Activated naive CD8-positive, alpha-beta T cell treated with anti-CD3 and anti-CD28 coated beads, Interleukin-2, amount 10 ng/mL, durations not matched to agents 7 days and 5 days (primary cell): ENCODE measurements at regions of chr19 and their contacts with region 1.

Region 1: DNA sequence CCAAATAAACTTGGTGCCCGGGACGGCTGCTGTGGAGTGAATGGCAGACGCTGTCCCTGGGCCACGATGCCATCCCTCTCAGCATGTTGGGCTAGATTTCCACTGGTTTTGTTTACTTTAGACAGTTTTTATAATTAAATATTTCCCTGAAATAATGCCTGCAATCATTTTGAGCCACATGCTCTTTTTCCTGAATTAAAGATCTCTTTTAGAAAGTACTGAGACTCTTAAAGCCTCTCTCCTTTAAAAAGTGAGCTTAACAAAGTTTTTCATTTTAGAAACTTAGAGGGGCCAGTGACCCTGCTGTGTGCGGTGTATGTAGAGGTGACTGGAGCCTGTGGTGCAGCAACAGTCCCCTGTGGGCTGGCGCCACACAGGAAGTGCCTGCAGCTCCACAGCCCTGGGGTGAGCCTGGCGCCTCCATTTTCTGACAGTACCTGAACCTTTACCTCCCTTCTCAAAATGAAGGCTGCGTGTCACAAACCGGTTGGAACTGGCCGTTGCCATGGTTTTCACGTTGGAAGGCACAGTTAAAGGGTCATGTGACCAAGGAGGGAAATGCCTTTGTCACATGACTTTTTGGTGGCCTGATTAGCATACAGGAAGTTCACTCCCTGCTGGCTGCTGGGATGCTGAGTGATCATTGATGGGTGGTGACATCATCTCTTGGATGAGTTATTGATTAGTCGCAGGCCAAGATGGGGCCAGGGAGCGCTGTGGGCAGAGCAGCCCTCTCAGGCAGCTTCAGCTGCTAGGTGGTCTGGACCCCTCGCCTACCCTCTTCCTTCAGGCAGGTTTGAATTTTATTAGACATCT is 26.3 kb downstream of the TSSK6 start:
- DNase-seq: peak; percentile 87
- ATAC-seq: peak; percentile 93
- H3K4me3 Mint-ChIP-seq: peak overlapping the region; percentile 73
- H3K27ac Mint-ChIP-seq: peak overlapping the region; percentile 99
- H3K4me1 Mint-ChIP-seq: peaks cover 36% of the 10 kb centered on the region
- H3K27me3 Mint-ChIP-seq: no peaks in the 10 kb centered on the region

Region 2: GRCh38 chr19:19366612-19367396 is 122.3 kb before region 1 on chr19:
- POLR2A ChIA-PET with region 1: interaction called, 50 read pairs
- DNase-seq: peak; percentile 85
- ATAC-seq: peak; percentile 83
- H3K4me3 Mint-ChIP-seq: peak overlapping the region; percentile 49
- H3K27ac Mint-ChIP-seq: peak overlapping the region; percentile 84
- H3K4me1 Mint-ChIP-seq: peaks cover 13% of the 10 kb centered on the region
- H3K27me3 Mint-ChIP-seq: no peaks in the 10 kb centered on the region

Region 3: GRCh38 chr19:19438366-19439185 is 50.5 kb before region 1 on chr19:
- POLR2A ChIA-PET with region 1: no interaction called
- DNase-seq: no peak
- ATAC-seq: no peak
- H3K4me3 Mint-ChIP-seq: no peak overlapping the region
- H3K27ac Mint-ChIP-seq: peak overlapping the region; percentile 15
- H3K4me1 Mint-ChIP-seq: peaks cover 19% of the 10 kb centered on the region
- H3K27me3 Mint-ChIP-seq: no peaks in the 10 kb centered on the region

Region 4: DNA sequence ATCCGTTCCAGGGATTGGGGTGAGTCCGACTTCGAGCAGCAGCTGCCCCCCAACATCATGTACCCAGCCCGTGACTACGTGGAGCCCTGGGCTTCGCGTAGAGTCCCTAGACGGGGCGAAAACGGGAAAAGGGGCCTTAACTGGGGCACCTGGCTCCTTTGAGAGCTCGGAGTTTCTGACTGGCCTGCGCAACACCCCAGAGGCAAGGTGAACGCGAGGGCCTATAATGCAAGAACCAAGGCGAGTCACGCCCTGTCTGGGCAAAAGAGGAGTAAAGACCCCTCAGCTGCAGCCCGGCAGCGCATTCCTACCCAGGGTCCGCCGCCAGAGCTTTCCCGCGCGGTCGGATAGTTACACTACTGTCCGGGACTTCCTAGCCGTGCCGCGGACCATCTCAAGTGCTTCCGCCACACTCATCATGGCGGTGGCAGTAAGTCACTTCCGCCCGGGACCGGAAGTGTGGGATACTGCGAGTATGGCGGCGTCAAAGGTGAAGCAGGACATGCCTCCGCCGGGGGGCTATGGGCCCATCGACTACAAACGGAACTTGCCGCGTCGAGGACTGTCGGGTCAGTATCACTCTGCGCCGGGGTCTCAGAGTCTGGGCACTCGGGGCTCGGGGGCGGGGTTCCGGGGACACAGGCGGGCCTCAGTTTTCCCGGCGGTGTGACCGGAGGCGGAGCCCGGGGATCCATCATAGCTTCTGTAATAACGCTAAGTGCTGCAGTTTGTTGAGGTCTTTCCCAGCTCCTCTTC is 26.9 kb after region 1 on chr19 and contains the start of gene NDUFA13:
- POLR2A ChIA-PET with region 1: interaction called, 15 read pairs
- DNase-seq: peak; percentile 98
- ATAC-seq: peak; percentile 89
- H3K4me3 Mint-ChIP-seq: peak within 1 kb of the TSS; percentile 89
- H3K27ac Mint-ChIP-seq: peak within 1 kb of the TSS; percentile 92
- H3K4me1 Mint-ChIP-seq: peaks cover 18% of the 10 kb centered on the region
- H3K27me3 Mint-ChIP-seq: no peaks in the 10 kb centered on the region
- total RNA-seq, gene NDUFA13: 306 to 336 TPM